ENCODE measurements at regions of chr5 and their contacts with region 1.

Region 1: DNA sequence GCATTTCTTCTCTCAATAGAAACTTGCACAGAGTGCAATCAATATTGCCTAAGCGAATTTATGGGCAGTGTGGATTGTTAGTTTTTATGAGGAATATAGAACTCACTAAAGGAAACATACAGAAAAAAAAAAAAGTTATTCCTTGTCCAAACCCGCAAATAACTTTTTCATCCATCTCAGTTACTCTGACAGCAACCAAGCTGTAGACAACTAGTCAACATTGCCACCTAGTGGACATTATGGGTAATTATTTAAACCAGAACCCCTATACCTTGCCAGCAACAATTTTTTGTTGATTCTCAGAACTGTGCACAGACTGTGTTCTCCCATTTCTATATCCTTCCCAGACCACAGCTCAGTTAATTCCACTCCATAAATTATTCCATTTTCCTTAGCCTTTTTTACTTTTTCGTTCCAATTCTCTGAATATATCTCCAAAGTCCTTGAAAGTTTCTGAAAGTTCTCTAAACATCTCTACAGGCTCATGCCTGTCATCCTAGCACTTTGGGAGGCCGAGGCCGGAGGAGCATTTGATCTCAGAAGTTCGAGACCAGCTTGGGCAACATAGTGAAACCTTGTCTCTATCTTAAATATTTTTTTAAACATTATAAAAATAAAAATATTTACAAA is 2.6 kb upstream of the AFAP1L1 start:
- DNase-seq: no peak
- ATAC-seq: no peak

Region 2: GRCh38 chr5:149053072-149053695 is 215.9 kb before region 1 on chr5:
- intact Hi-C with region 1: loop called in 1 of 2 experiments (anchors 10 kb)
- DNase-seq: no peak
- ATAC-seq: peak; percentile 15 to 88